Activated CD8-positive, alpha-beta T cell treated with anti-CD3 and anti-CD28 coated beads for 36 hours (primary cell): ENCODE measurements at regions of chr10 and their contacts with region 1.

Region 1: GRCh38 chr10:92822060-92822634 is 26.2 kb upstream of the EXOC6 start:
- DNase-seq: no peak
- ATAC-seq: no peak
- H3K4me3 Mint-ChIP-seq: no peak overlapping the region
- H3K27ac Mint-ChIP-seq: peak overlapping the region; percentile 24
- H3K4me1 Mint-ChIP-seq: peaks cover 10% of the 10 kb centered on the region
- H3K27me3 Mint-ChIP-seq: no peaks in the 10 kb centered on the region
- CTCF ChIP-seq: no peak

Region 2: DNA sequence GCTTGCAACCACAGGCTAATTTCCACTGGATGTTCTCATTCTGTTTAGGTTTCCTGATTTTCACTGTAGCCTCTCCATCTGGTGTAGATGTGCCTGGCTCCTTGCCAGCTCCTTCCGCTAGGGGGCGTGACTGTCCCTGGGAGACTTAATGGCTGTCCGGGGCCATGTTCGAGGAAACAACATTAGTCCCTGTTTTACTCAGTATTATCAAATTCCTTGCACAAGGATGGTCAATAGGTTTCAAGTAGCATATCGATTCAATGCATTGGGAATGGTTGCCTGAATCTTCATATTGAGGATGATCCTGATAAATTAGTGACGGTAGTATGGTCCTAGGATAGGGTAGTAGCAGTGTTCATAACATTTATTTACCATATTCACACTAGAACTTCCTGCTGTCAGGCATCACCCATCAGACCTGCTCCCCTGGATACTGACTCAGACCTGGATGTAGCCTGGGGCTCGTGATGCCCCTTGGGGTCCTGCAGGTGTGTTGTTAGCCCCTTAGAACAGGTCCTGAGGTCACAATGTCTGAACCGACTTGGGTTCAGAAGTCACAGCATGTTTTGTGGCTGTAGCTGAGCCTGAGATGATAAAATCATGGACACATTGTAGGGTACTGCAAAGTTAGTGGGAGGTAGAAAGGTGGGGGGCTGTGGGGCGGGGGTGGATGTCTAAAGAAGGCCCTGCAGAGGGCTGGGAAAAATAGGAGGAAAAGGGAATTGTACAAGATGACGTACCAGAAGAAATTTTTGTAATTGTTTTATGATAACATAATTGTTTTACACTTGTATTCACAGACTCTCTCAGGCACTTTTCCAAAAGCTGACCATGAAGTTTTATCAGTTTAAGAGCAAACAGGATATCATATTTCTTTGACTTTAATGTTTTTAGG is 17.3 kb after region 1 on chr10:
- CTCF ChIA-PET with region 1: interaction called, 16 read pairs
- POLR2A ChIA-PET with region 1: no interaction called
- intact Hi-C with region 1: no loop called
- DNase-seq: peak; percentile 78
- ATAC-seq: peak; percentile 66
- H3K4me3 Mint-ChIP-seq: no peak overlapping the region
- H3K27ac Mint-ChIP-seq: no peak overlapping the region
- H3K4me1 Mint-ChIP-seq: peaks cover 4% of the 10 kb centered on the region
- H3K27me3 Mint-ChIP-seq: no peaks in the 10 kb centered on the region
- CTCF ChIP-seq: peak; percentile 70